Left cardiac atrium (tissue), 4 donors: ENCODE measurements at regions of chr6 and their contacts with region 1.

Region 1: GRCh38 chr6:44452725-44453124 is 65.2 kb downstream of the CDC5L start:
- DNase-seq: no peak
- ATAC-seq: peak in 1 of 2 donors; percentile 74

Region 2: DNA sequence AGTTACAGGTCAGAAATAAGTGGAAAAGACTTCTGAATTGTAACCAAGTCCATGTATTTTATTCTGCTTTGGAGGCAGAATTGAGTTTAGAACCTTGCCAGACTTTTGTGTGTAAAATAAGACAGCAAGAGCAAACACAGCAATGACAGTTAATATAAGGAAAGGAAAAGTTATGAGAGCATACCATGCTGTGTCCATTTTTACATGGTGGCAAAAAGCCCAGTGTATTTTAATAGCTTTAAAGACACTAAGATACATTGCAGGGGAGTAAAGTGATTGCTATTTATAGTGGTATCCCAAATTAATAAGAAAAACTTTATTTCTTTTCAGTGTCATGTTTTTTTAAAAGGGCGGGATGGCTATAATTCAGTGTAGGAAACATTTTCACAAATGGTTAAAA is 20.0 kb before region 1 on chr6:
- intact Hi-C with region 1: loop called in 1 of 2 experiments (anchors 2 kb)
- DNase-seq: no peak
- ATAC-seq: peak; percentile 24 to 47